Head of caudate nucleus (tissue), 42 donors: ENCODE measurements at regions of chr2 and their contacts with region 1.

Region 1: DNA sequence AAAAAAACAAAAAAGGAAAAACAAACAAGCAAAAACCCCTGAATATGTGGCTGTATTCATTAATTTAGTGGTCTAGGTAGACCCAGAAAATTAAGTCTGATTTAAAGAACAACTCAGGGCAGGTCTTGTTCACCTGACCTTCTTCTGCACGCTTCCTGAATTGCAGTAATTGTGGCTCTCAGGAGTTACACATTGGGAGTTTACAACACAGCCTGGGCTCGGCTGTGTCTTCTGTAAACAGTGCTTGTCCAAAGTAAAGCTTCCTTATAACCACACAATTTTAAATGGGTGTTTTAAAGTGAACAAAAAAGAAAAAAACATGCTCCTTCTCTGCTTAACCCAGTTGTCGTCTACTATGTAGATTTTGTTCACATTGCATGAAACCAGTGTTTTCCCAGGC is 8.3 kb upstream of the MTIF2 start:
- DNase-seq: no peak

Region 2: GRCh38 chr2:55357927-55358326 is 80.6 kb after region 1 on chr2:
- intact Hi-C with region 1: loop called (anchors 10 kb)
- DNase-seq: no peak

Region 3: DNA sequence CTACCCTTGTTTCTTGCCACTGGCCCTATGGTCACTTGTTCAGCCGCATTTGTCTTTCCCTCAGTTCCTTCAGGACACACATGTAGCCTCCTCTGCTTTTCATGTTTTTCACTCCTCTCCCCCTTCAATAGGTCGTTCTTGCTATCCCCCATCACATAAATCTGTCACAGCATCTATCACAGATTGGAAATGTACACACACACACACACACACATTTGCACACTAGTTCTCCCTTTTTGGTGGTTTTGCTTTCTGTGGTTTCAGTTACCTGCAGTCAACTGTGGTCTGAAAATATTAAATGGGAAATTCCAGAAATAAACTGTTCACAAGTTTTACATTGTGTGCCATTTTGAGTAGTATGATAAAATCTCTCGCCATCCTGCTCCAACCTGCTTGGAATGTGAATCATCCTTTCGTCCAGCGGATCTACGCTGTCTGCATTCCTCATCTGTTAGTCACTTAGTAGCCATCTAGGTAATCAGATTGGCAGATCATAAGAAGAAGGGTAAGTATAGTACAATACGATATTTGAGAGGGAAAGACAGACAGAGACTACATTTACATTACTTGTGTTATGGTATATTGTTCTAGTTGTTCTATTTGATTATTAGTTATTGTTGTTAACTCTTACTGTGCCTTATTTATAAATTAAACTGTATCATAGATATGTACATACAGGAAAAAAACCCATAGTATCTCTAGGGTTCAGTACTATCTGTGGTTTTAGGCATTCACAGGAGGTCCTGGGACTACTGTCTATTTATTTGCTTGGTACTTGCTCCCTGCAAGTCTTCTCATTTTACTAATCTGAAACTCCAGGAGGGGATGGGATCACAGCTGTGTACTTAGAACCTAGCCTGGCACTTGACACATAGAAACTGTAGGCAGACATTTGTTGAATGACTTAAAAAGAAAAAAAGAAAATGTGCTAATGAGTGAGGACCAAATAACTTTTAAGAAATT is 502.4 kb after region 1 on chr2:
- intact Hi-C with region 1: no loop called
- DNase-seq: no peak